ENCODE measurements at regions of chr9 and their contacts with region 1.

Region 1: DNA sequence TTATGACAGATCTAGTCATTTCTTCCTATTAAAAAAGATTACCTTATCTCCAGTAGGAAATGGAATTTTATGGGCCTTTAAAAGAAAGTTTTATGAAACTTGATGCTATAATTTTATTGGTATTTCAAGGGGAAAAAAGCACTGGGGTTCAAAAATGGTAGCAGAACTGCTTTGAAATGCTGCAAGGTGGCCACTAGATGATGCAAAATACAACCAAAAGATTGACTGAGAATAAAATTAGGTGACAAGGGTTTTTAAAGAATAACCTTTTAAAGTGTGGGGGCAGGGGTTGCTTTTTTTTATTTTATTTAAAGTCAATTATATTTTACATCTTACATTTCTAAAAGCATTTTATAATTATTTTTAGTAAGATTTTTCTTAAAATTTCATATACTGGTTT is 61.7 kb downstream of the KLF9 start:
- DNase-seq: no peak
- ATAC-seq: peak; percentile 32

Region 2: DNA sequence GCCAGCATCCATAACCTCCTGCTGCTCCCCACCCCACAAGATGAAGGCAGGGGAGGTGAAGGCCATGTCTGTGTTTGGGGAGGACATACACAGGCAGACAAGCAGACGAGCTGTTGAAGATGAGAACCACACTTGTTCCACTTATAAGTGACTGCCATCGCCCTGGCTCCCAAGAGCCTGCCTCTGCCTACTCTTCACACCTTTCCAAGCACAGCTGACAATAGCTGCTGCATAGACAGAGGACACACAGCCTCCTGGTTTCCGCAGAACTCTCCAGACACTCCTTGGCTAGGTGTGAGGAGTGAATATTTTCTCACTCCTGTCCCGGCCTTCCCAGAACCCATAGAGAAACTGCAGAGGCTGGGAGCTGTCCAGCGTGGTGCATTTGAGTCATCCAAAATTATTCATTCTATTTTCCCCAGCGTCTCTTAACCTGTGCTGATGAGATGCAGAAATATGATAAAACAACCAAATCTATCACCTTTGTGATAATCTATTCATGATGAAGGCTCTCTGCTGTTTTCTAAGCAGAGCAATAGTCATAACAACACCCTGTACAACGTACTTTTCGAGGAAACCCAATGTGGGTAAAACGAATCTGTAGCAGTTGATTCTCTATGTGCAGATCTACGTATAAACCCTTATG is 36.9 kb after region 1 on chr9:
- intact Hi-C with region 1: loop called (anchors 5 kb)
- DNase-seq: no peak
- ATAC-seq: peak; percentile 45

Region 3: GRCh38 chr9:70413798-70414775 is 61.3 kb after region 1 on chr9 and contains the start of gene KLF9:
- intact Hi-C with region 1: loop called (anchors 10 kb)
- DNase-seq: peak; percentile 95
- ATAC-seq: peak; percentile 70
- total RNA-seq, gene KLF9: 50.9 TPM

Region 4: GRCh38 chr9:70438341-70438928 is 85.6 kb after region 1 on chr9:
- intact Hi-C with region 1: no loop called
- DNase-seq: peak; percentile 65
- ATAC-seq: peak; percentile 85

Region 5: GRCh38 chr9:70602321-70603019 is 249.7 kb after region 1 on chr9:
- intact Hi-C with region 1: loop called (anchors 5 kb)
- DNase-seq: peak; percentile 51
- ATAC-seq: peak; percentile 75

Region 6: DNA sequence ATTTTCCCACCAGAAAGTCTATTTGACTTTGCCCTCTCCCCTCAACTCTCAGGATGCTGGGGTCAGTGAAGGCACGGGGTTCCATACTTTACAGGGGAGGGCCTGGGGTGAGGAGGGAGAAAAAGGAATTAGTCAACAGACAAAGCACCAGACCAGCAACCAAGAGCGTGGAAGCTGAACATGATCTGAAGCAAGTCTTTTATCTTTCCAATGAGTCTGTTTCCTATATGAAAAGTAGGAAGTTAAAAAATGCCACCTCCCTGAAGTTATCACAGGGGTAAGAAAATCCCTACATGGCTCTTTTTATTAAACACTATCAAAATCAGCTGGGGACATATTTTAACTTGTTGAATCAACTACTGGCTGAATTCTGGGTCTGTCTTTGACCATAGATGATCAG is 431.7 kb after region 1 on chr9:
- intact Hi-C with region 1: no loop called
- DNase-seq: no peak
- ATAC-seq: no peak